GM18951 (cell line): ENCODE measurements at regions of chr3 and their contacts with region 1.

Region 1: GRCh38 chr3:142993958-142994442 is 7.4 kb upstream of the U2SURP start:
- POLR2A ChIP-seq: no peak

Region 2: GRCh38 chr3:142578327-142579223 is 415.4 kb before region 1 on chr3 and contains the start of gene ATR:
- in situ Hi-C with region 1: loop called (anchors 25 kb)
- POLR2A ChIP-seq: peak; percentile 86

Region 3: GRCh38 chr3:142828703-142829305 is 165.2 kb before region 1 on chr3:
- in situ Hi-C with region 1: loop called (anchors 10 kb)
- POLR2A ChIP-seq: no peak